ENCODE measurements at regions of chr3 and their contacts with region 1.

Region 1: DNA sequence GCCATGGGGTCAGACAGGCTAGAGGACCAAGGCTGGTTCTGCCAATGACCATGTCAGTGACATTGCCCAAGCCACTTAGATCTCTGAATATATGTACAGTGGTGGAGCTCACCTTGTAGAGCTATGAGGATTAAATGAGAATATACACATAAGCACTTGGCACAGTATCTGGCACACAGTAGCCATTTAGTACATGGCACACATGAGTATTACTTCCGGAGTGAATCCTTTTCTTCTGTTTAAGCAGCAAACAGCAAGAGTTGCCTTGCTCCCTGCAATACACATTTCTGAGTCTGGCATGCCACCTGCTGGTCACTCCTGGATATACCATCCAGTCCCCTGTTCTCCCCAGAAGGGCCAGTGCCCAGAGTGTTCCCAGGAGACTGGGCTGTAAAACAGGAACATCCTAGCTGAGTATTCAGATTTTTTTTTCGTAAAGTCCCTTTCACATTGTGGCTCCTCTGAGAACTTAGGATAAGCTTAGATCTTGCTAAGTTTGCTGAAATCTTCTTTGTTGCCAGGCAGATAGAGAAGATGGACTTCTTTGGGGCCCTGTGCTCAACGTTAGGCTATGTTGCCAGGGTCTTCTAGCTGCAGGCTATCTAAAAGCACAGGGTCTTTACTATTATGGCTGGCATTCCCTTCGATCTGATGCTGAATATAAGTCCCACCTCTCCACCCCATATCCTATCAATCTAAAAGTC is 203.4 kb downstream of the ADAMTS9 start:
- DNase-seq: peak; percentile 83
- ATAC-seq: peak; percentile 98
- H3K4me3 Mint-ChIP-seq: no peak overlapping the region
- H3K27ac Mint-ChIP-seq: no peak overlapping the region
- H3K4me1 Mint-ChIP-seq: no peaks in the 10 kb centered on the region
- H3K27me3 Mint-ChIP-seq: peaks cover 14% of the 10 kb centered on the region
- CTCF ChIP-seq: peak; percentile 72

Region 2: DNA sequence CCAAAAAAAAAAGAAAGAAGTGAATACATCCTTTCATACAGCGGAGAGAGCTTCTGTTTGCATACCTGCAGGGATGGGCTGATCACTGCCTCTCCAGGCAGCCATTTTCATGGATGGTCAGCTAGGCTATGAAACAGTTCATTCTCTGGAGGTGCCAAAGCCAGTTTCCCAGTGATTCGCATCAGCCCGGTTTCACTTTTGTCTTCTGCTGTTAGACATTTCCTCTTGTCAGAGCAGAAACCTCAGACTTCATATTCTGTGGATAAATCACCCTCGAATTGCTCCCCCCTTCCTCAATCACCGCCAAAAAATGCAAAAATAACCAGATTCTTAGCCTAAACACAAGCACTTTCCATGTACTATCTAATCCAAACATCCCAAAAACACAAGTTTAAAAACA is 22.2 kb before region 1 on chr3:
- CTCF ChIA-PET with region 1: interaction called, 14 read pairs
- POLR2A ChIA-PET with region 1: interaction called, 3 read pairs
- intact Hi-C with region 1: no loop called
- DNase-seq: no peak
- ATAC-seq: no peak
- H3K4me3 Mint-ChIP-seq: no peak overlapping the region
- H3K27ac Mint-ChIP-seq: no peak overlapping the region
- H3K4me1 Mint-ChIP-seq: no peaks in the 10 kb centered on the region
- H3K27me3 Mint-ChIP-seq: peaks cover 12% of the 10 kb centered on the region
- CTCF ChIP-seq: no peak

Measured in activated CD8-positive, alpha-beta T cell treated with anti-CD3 and anti-CD28 coated beads for 36 hours (primary cell).